Calu3 (cell line): ENCODE measurements at regions of chr2 and their contacts with region 1.

Region 1: DNA sequence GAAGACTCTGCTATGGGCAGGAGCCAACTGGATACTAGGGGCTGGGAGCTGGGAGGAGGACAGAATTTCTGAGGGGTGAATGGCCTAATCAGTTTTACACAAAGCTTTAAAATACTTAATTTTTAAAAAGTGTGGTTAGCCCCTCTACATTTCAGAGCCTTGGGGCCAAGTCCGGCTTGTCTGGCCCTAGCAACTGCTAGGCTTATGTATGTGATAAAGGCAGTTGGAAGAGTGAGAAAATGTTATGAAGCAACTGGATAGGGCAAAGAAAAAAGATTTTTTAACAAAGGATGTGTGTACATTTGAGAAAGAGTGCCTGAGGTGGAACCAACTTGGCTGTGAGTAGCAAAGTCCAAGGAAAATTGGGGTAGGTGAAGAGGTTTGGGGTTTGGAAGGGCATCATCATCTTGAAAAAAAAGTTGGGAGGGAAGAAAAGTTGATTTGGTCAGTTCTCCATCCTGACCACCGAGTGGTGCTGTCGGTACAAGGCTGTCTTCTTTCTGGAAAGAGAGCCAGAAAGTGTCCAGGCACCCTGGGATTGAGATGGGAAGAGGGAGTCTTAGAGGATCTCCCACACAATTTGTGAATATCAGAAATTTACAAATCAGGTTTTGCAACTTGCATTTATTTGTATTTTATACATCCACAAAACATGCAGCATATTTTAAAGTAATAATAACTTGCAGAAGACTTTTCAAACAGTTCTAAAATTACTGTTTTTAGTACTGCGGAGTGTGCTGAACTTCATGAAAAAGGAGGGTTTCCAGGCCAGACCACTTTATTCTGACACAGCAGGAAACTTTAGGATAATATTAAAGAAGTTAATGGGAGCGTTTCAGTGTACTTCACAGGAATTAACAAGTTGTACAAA is 10.5 kb upstream of the CDK15 start:
- DNase-seq: peak; percentile 55
- H3K4me3 Mint-ChIP-seq: no peak overlapping the region
- H3K27ac Mint-ChIP-seq: no peak overlapping the region
- H3K4me1 Mint-ChIP-seq: peaks cover 23% of the 10 kb centered on the region
- H3K27me3 Mint-ChIP-seq: no peaks in the 10 kb centered on the region
- CTCF ChIP-seq: peak; percentile 70

Region 2: DNA sequence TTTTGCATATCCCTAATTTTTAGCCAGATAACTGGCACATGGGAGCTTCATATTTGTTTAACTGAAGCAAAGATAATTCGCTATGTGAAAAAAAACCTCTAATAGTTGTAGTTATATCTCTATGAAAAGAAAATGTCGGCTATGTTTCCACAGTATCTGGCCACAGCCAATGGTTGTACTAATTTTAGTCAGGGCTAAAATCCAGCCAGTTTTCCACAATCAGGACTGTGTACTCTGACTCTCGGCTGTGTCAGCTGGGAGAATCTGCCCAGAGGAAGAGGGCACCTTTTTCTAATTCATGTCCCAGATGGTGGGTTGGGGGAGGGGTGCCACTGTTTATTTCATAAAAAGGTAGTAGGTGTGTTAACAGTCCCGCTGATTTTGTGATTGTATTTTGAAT is 305.6 kb before region 1 on chr2:
- CTCF ChIA-PET with region 1: no interaction called
- intact Hi-C with region 1: no loop called
- DNase-seq: no peak
- H3K4me3 Mint-ChIP-seq: no peak overlapping the region
- H3K27ac Mint-ChIP-seq: no peak overlapping the region
- H3K4me1 Mint-ChIP-seq: no peaks in the 10 kb centered on the region
- H3K27me3 Mint-ChIP-seq: no peaks in the 10 kb centered on the region
- CTCF ChIP-seq: no peak

Region 3: GRCh38 chr2:201860636-201861066 is 64.8 kb after region 1 on chr2:
- CTCF ChIA-PET with region 1: interaction called, 5 read pairs
- intact Hi-C with region 1: loop called (anchors 1 kb)
- DNase-seq: peak; percentile 65
- H3K4me3 Mint-ChIP-seq: no peak overlapping the region
- H3K27ac Mint-ChIP-seq: no peak overlapping the region
- H3K4me1 Mint-ChIP-seq: peaks cover 28% of the 10 kb centered on the region
- H3K27me3 Mint-ChIP-seq: peaks cover 24% of the 10 kb centered on the region
- CTCF ChIP-seq: peak; percentile 87

Region 4: GRCh38 chr2:202056392-202057010 is 260.7 kb after region 1 on chr2:
- CTCF ChIA-PET with region 1: no interaction called
- intact Hi-C with region 1: loop called (anchors 5 kb)
- DNase-seq: peak; percentile 27
- H3K4me3 Mint-ChIP-seq: no peak overlapping the region
- H3K27ac Mint-ChIP-seq: no peak overlapping the region
- H3K4me1 Mint-ChIP-seq: peaks cover 6% of the 10 kb centered on the region
- H3K27me3 Mint-ChIP-seq: peaks cover 20% of the 10 kb centered on the region
- CTCF ChIP-seq: peak; percentile 21

Region 5: DNA sequence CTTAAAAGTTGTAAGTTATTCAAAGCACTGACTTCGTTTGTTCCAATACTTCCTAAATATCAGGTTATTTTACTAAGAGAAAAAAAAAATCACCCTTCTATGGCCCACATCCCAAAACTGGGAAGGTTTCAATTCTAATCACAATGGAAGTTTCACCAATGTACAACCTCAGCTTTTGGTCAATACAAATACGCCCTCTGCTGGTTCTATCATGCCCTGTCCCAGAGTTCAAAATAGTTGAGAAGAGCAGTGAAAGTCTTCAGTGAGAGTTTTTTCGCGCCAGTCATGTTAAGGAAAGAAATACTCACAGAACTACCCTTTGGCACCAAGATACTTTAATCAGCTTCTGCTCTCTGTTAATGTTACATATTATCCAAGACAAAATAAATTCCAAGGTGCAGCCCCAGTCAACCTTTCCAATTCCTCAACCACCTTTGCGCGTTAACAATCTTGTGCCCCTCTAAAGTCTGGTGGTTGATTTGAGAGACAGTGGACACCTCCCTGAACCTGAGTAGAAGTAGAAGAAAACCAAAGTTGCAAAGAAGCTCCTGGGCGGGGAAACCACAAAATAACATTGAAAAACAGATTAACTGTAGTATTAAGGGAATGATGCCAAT is 382.6 kb after region 1 on chr2:
- CTCF ChIA-PET with region 1: no interaction called
- intact Hi-C with region 1: loop called (anchors 1 kb)
- DNase-seq: peak; percentile 67
- H3K4me3 Mint-ChIP-seq: no peak overlapping the region
- H3K27ac Mint-ChIP-seq: no peak overlapping the region
- H3K4me1 Mint-ChIP-seq: peaks cover 15% of the 10 kb centered on the region
- H3K27me3 Mint-ChIP-seq: no peaks in the 10 kb centered on the region
- CTCF ChIP-seq: peak; percentile 72

Region 6: DNA sequence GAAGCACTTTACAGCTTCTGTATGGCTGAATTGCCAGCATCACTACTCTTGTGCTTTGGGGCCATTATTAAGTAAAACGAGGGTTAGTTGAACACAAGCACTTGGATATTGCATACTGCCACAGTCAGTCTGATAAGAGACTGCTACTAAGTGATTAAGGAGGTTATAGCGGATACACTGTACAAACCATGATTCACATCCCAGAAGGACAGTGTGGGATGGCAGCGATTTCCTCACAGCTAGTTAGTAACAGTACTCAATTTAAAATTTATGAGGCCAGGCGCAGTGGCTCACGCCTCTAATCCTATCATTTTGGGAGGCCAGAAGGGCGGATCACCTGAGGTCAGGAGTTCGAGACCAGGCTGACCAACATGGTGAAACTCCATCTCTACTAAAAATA is 577.6 kb after region 1 on chr2:
- CTCF ChIA-PET with region 1: no interaction called
- intact Hi-C with region 1: no loop called
- DNase-seq: no peak
- H3K4me3 Mint-ChIP-seq: no peak overlapping the region
- H3K27ac Mint-ChIP-seq: no peak overlapping the region
- H3K4me1 Mint-ChIP-seq: peaks cover 11% of the 10 kb centered on the region
- H3K27me3 Mint-ChIP-seq: no peaks in the 10 kb centered on the region
- CTCF ChIP-seq: no peak